Right cardiac atrium (tissue), 5 donors: ENCODE measurements at regions of chr1 and their contacts with region 1.

Region 1: DNA sequence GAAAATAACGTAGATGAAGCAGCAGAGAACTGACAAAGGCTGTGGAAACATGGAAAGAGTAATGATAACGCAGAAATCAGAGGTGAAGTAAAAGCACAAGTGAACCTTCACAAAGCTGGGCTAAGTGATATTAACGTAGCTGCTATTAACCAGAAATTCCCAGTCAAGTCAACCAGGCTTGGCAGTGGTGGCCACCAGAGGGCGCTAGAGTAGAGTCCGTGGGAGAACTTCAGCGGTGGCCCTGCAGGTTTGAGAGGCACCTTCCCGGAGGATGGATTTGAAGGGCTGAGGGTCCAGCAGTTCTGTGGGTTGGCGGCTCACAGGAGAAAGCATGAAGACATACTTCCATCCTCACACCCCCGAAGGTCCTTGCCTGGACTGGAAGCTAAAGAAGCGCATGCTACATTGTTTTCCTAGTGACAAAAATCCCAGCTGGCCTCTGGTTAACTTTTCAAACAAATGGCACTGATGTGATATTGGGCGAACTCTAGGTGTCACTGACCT is 81.7 kb upstream of the ZNF648 start:
- DNase-seq: peak; percentile 91 to 98 (median 95)
- ATAC-seq: peak; percentile 69 to 80
- H3K4me3 ChIP-seq: no peak overlapping the region
- H3K27ac ChIP-seq: peak overlapping the region; percentile 93
- H3K4me1 ChIP-seq: peaks cover 10% of the 10 kb centered on the region
- H3K27me3 ChIP-seq: no peaks in the 10 kb centered on the region

Region 2: GRCh38 chr1:182084487-182085316 is 58.5 kb before region 1 on chr1:
- intact Hi-C with region 1: loop called in 1 of 4 experiments (anchors 5 kb)
- DNase-seq: peak; percentile 80 to 95 (median 92)
- ATAC-seq: peak; percentile 91 to 94
- H3K4me3 ChIP-seq: no peak overlapping the region
- H3K27ac ChIP-seq: no peak overlapping the region
- H3K4me1 ChIP-seq: no peaks in the 10 kb centered on the region
- H3K27me3 ChIP-seq: no peaks in the 10 kb centered on the region

Region 3: GRCh38 chr1:182198049-182198501 is 54.9 kb after region 1 on chr1:
- intact Hi-C with region 1: loop called in 2 of 4 experiments (anchors 5 to 10 kb)
- DNase-seq: peak in 1 of 3 donors; percentile 49
- ATAC-seq: no peak
- H3K4me3 ChIP-seq: no peak overlapping the region
- H3K27ac ChIP-seq: no peak overlapping the region
- H3K4me1 ChIP-seq: peaks cover 8% of the 10 kb centered on the region
- H3K27me3 ChIP-seq: no peaks in the 10 kb centered on the region

Region 4: DNA sequence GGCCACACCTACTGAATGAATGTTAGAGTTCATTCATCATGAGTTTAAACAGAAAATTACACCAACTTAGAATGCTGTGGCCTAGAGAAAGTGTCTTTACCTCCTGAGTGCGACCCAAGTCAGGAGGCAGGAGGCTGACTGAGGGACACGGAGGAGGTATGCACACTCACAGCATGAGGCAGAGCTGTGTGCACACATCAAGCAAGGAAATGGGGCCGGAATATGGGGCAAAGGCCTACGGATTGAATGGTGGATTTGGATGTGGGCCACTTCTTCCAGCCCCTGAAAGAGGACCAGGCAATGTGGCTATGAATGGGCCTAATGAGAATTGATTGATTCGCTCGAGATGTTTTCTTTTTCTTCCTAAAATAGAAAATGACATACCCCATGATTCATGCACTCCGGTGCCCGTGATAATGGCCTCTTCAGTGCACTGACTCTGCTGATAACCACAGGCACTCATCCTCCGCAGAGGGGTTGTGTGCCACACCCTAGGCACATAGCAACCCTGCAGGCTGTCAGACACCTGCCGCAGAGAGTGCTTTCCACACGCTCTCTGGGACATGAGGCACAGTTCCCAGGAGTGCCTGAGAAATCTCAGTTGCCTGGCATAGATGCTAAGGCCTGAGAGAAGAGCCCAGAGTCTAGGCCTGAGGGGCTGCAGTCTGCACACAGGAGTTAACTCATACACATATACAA is 92.9 kb after region 1 on chr1:
- intact Hi-C with region 1: no loop called
- DNase-seq: peak; percentile 48 to 77 (median 73)
- ATAC-seq: peak; percentile 94 to 95
- H3K4me3 ChIP-seq: no peak overlapping the region
- H3K27ac ChIP-seq: peak overlapping the region; percentile 72
- H3K4me1 ChIP-seq: peaks cover 13% of the 10 kb centered on the region
- H3K27me3 ChIP-seq: no peaks in the 10 kb centered on the region

Region 5: DNA sequence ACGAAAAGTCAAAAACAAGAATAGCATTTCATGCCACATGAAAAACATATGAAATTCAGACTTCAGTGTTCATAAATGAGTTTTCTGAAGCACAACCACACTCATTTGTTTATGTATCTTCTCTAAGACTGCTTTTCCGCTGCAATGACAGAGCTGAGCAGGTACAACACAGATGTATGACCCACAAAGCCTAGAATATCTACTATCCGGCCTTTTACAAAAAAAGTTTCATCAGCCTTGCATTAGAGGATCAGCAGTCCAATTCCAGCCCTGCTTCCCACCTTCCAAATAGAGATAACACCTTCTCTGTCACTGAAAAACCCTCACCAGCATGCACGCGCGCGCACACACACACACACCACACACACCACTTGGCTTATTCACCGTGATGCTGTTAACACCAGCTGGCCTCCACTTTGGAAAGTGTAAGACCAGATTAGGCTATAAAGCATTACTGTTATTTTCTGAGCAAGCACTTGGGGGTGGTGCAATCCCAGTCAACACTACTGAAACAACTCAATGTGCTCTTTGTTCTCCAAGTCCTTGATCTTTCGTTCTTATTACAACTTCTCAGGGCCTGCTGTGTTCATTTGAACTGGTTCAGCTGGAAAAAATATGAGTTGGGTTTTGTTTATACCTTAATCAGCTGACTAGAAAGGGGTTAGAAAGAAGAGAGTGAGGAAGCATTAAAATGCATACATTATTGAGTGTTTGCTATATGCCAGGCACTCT is 158.4 kb after region 1 on chr1:
- intact Hi-C with region 1: loop called in 2 of 4 experiments (anchors 10 kb)
- DNase-seq: peak; percentile 64 to 86 (median 80)
- ATAC-seq: peak; percentile 84 to 89
- H3K4me3 ChIP-seq: no peak overlapping the region
- H3K27ac ChIP-seq: no peak overlapping the region
- H3K4me1 ChIP-seq: peaks cover 5% of the 10 kb centered on the region
- H3K27me3 ChIP-seq: no peaks in the 10 kb centered on the region

Region 6: DNA sequence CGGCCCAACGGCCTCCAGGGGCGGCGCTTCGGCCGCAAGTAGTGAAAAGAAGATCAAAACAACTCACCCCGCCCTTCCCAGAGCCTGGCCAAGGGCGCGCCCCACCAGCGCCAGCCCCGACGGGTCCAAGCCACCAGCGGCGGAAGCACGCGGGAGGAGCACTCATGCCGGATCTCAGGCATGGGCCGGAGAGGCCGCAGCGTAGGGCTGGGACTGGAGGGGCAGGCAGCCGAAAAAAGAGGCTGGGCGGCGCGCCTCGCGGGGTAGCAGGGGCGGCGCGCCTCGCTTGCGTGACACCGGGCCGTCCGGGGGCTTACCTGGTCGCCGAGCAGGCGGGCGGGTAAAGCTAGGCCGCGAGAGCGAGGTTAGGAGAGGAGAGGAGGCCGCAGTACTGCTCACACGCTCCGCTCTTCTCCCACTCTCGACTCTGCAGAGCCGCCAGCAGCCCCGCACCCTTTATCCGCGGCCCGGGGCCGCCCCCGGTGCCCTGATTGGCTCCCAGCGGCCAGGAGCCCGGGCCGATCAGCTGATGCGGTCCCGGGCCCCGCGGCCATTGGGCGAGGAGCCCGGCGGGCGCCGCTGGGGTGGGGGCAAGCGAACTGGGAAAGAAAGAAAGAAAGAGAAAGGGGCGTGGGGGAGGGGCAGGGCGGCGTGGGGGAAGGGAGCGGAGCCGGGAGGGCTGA is 248.3 kb after region 1 on chr1 and contains the start of gene GLUL:
- intact Hi-C with region 1: loop called (anchors 2 to 5 kb)
- DNase-seq: peak; percentile 93 to 98 (median 98)
- ATAC-seq: peak; percentile 95 to 96
- H3K4me3 ChIP-seq: peak within 1 kb of the TSS; percentile 91
- H3K27ac ChIP-seq: peak within 1 kb of the TSS; percentile 97
- H3K4me1 ChIP-seq: peaks cover 2% of the 10 kb centered on the region
- H3K27me3 ChIP-seq: no peaks in the 10 kb centered on the region
- total RNA-seq, gene GLUL: 303 to 361 (median 342) TPM

Region 7: GRCh38 chr1:182397771-182398393 is 254.7 kb after region 1 on chr1:
- intact Hi-C with region 1: loop called (anchors 2 to 5 kb)
- DNase-seq: peak in 1 of 3 donors; percentile 50
- ATAC-seq: no peak
- H3K4me3 ChIP-seq: no peak overlapping the region
- H3K27ac ChIP-seq: no peak overlapping the region
- H3K4me1 ChIP-seq: no peaks in the 10 kb centered on the region
- H3K27me3 ChIP-seq: no peaks in the 10 kb centered on the region